CD4-positive, alpha-beta memory T cell (primary cell): ENCODE measurements at regions of chr13 and their contacts with region 1.

Region 1: DNA sequence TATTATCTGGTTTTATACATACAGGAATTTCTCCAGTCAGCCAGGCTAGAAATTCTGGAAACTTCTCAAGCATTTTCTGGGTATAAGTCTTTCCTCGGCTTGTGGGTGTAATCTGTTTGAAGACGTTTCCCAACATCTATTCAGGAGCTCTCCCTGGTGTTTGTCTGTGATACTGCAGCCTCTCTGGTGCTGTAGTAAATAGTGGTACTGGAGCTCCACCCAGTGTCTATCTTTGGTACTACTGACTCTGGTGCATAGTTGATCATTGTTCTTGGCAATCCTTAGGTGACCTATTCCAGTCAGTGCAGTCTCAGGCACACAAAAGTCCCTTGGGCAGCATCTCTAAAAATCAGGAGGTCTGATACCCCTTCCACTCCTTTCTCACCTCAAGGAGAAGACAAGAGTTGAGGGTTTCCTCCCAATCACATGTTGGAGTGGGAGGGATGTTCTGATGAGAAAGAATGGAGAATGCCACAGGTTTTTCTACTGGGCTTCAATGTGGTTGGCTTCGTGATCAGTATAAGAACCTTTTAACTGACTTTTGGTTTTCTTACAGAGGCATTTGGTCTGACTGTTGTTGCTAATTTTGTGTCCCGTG is 115.5 kb downstream of the CYSLTR2 start:
- DNase-seq: peak; percentile 83 to 85 (median 85)
- H3K4me3 ChIP-seq: no peak overlapping the region
- H3K4me3 Mint-ChIP-seq: peak overlapping the region in 1 of 8 donors; percentile 11
- H3K27ac ChIP-seq: no peak overlapping the region
- H3K27ac Mint-ChIP-seq: peak overlapping the region in 2 of 7 donors; percentile 5 to 58
- H3K4me1 ChIP-seq: no peaks in the 10 kb centered on the region
- H3K4me1 Mint-ChIP-seq: peaks cover 3 to 15% (median 5%) of the 10 kb centered on the region in 4 donors
- H3K27me3 ChIP-seq: no peaks in the 10 kb centered on the region
- H3K27me3 Mint-ChIP-seq: peaks cover 6 to 8% of the 10 kb centered on the region in 2 donors

Region 2: DNA sequence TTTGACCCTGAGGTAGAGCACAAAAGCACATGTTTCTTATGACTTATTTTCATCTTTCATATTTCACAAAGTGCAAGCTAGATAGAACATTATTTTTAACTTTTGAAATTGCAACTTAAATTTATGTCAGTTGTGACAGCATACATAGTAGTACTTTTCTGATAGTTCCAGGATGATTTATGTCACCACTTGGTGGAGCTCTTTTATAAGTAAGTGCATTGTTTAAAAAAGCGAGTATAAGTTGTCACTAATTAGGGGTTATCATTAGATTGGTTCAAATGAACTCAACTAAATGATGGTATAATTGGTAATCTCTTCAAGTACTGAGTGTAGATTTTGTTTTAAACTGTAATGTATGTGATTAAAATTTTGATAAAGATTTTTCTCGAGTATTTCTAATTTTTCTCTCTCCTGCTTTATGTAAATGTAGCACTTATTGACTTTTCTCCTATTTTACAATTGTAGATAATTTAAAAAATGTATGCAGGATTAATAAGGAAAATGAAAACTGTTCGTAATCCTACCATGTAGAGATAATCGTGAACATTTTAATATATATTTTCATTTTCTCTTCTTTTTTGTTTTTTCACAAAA is 434.6 kb before region 1 on chr13:
- CTCF ChIA-PET with region 1: interaction called, 59 read pairs
- POLR2A ChIA-PET with region 1: interaction called, 3 read pairs
- intact Hi-C with region 1: loop called (anchors 1 kb)
- DNase-seq: peak in 4 of 5 donors; percentile 50 to 55 (median 52)
- H3K4me3 ChIP-seq: no peak overlapping the region
- H3K4me3 Mint-ChIP-seq: no peak overlapping the region
- H3K27ac ChIP-seq: no peak overlapping the region
- H3K27ac Mint-ChIP-seq: peak overlapping the region in 1 of 7 donors; percentile 13
- H3K4me1 ChIP-seq: peaks cover 8% of the 10 kb centered on the region
- H3K4me1 Mint-ChIP-seq: peaks cover 6 to 16% (median 10%) of the 10 kb centered on the region in 4 donors
- H3K27me3 ChIP-seq: no peaks in the 10 kb centered on the region
- H3K27me3 Mint-ChIP-seq: no peaks in the 10 kb centered on the region

Region 3: DNA sequence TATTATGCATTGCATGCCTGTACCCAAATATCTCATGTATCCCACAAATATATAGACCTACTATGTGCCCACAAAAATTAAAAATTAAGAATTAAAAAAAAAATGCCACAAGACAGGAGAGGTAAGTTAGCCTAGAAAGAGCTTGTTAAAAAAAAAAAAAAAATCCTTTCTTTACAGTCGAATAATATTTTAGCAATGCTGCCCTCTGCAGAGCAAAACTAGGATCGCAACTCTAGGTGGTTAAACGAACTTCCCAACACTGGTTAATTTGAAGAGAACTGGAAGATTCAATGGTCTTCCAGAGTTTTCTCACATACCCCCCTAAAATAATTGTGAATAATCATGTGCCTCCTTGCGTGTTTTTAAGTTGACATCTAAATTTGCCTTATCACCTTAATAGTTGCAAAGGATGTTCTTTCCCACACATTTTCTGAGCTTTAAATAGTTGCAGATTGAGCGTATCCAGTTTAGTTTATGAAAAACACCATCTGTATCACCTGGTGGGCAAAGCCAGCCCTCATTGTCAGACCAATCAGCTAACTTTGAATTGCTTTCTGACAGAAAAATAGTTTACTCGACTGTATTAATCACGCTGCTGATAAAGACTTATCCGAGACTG is 188.9 kb before region 1 on chr13:
- CTCF ChIA-PET with region 1: interaction called, 17 read pairs
- POLR2A ChIA-PET with region 1: no interaction called
- intact Hi-C with region 1: loop called (anchors 1 kb)
- DNase-seq: peak; percentile 64 to 74 (median 70)
- H3K4me3 ChIP-seq: no peak overlapping the region
- H3K4me3 Mint-ChIP-seq: peak overlapping the region in 1 of 8 donors; percentile 31
- H3K27ac ChIP-seq: no peak overlapping the region
- H3K27ac Mint-ChIP-seq: peak overlapping the region in 2 of 7 donors; percentile 0 to 43
- H3K4me1 ChIP-seq: peaks cover 19% of the 10 kb centered on the region
- H3K4me1 Mint-ChIP-seq: peaks cover 4 to 28% (median 13%) of the 10 kb centered on the region in 4 donors
- H3K27me3 ChIP-seq: no peaks in the 10 kb centered on the region
- H3K27me3 Mint-ChIP-seq: peaks cover 0 to 4% of the 10 kb centered on the region in 2 donors

Region 4: DNA sequence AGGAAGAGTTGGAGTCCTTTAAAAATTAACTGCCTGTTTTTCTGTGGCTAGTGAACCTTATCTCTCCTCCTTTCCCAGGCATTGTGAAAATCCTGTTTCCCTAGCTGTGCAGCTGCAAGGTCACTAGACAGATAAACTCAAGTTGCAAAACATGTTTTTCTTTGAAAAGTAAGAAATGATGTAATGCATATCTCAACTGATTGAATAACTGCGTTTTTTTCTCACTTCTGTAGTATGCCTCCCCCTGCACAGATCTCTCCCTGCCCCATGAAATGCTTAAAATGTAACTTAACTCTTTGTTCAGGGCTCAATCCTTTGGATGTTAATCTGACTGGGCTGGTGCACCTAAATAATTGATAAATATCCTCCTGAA is 143.1 kb before region 1 on chr13:
- CTCF ChIA-PET with region 1: no interaction called
- POLR2A ChIA-PET with region 1: no interaction called
- intact Hi-C with region 1: loop called (anchors 1 kb)
- DNase-seq: no peak
- H3K4me3 ChIP-seq: no peak overlapping the region
- H3K4me3 Mint-ChIP-seq: no peak overlapping the region
- H3K27ac ChIP-seq: no peak overlapping the region
- H3K27ac Mint-ChIP-seq: peak overlapping the region in 1 of 7 donors; percentile 8
- H3K4me1 ChIP-seq: no peaks in the 10 kb centered on the region
- H3K4me1 Mint-ChIP-seq: no peaks in the 10 kb centered on the region
- H3K27me3 ChIP-seq: no peaks in the 10 kb centered on the region
- H3K27me3 Mint-ChIP-seq: peaks cover 0 to 2% of the 10 kb centered on the region in 2 donors

Region 5: GRCh38 chr13:48749699-48750473 is 19.3 kb before region 1 on chr13:
- CTCF ChIA-PET with region 1: interaction called, 31 read pairs
- POLR2A ChIA-PET with region 1: no interaction called
- intact Hi-C with region 1: no loop called
- DNase-seq: peak; percentile 10 to 51 (median 13)
- H3K4me3 ChIP-seq: no peak overlapping the region
- H3K4me3 Mint-ChIP-seq: peak overlapping the region in 7 of 8 donors; percentile 51 to 80 (median 58)
- H3K27ac ChIP-seq: no peak overlapping the region
- H3K27ac Mint-ChIP-seq: peak overlapping the region in 5 of 7 donors; percentile 28 to 89 (median 76)
- H3K4me1 ChIP-seq: peaks cover 13% of the 10 kb centered on the region
- H3K4me1 Mint-ChIP-seq: peaks cover 3 to 13% (median 8%) of the 10 kb centered on the region in 4 donors
- H3K27me3 ChIP-seq: no peaks in the 10 kb centered on the region
- H3K27me3 Mint-ChIP-seq: no peaks in the 10 kb centered on the region